ENCODE measurements at regions of chr3 and their contacts with region 1.

Region 1: DNA sequence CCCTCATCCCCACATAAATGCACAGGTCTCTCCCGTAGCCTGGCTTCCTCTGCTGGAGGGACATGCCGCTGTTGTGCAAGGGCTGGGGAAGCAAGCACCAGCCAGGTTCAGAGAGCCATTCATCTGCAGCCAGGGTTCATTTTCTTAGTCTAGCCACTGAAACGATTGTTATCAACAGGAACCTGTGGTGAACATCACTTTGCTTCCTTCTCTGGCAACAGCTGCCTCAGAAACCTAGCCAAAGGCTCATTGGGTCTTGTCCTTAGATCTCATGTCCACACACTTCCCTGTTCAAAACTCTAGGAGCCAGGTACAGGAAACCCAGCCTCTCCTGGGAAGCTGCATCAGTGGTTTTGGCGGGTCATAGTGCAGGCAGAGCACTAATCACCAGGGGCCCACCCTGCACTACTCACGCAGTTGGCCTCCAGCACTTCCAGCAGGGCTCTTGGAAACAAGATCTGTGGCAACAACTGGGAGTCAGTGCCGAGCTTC is 47.0 kb downstream of the OXNAD1 start:
- DNase-seq: peak; percentile 60
- ATAC-seq: peak; percentile 75
- H3K4me3 Mint-ChIP-seq: peak overlapping the region; percentile 73
- H3K27ac Mint-ChIP-seq: peak overlapping the region; percentile 86
- H3K4me1 Mint-ChIP-seq: peaks cover 82% of the 10 kb centered on the region
- H3K27me3 Mint-ChIP-seq: no peaks in the 10 kb centered on the region

Region 2: GRCh38 chr3:16264708-16265454 is 47.1 kb before region 1 on chr3 and contains the starts of genes DPH3 and OXNAD1:
- POLR2A ChIA-PET with region 1: interaction called, 14 read pairs
- DNase-seq: peak; percentile 99
- ATAC-seq: peak; percentile 96
- H3K4me3 Mint-ChIP-seq: peak within 1 kb of the TSS; percentile 97
- H3K27ac Mint-ChIP-seq: peak within 1 kb of the TSS; percentile 96
- H3K4me1 Mint-ChIP-seq: peaks cover 27% of the 10 kb centered on the region
- H3K27me3 Mint-ChIP-seq: no peaks in the 10 kb centered on the region
- total RNA-seq, gene DPH3: 12.1 to 14.9 TPM
- total RNA-seq, gene OXNAD1: 76.8 to 77.1 TPM

Region 3: GRCh38 chr3:16300881-16301359 is 11.1 kb before region 1 on chr3:
- POLR2A ChIA-PET with region 1: interaction called, 141 read pairs
- DNase-seq: no peak
- ATAC-seq: peak; percentile 78
- H3K4me3 Mint-ChIP-seq: peak overlapping the region; percentile 92
- H3K27ac Mint-ChIP-seq: peak overlapping the region; percentile 92
- H3K4me1 Mint-ChIP-seq: peaks cover 81% of the 10 kb centered on the region
- H3K27me3 Mint-ChIP-seq: no peaks in the 10 kb centered on the region

Region 4: GRCh38 chr3:16322189-16322588 is 10.2 kb after region 1 on chr3:
- POLR2A ChIA-PET with region 1: no interaction called
- DNase-seq: no peak
- ATAC-seq: no peak
- H3K4me3 Mint-ChIP-seq: no peak overlapping the region
- H3K27ac Mint-ChIP-seq: peak overlapping the region; percentile 68
- H3K4me1 Mint-ChIP-seq: peaks cover 47% of the 10 kb centered on the region
- H3K27me3 Mint-ChIP-seq: no peaks in the 10 kb centered on the region

Measured in activated naive CD8-positive, alpha-beta T cell treated with anti-CD3 and anti-CD28 coated beads, Interleukin-2, amount 10 ng/mL, durations not matched to agents 7 days and 5 days (primary cell).